Dorsolateral prefrontal cortex (tissue), 120 donors: ENCODE measurements at regions of chr19 and their contacts with region 1.

Region 1: GRCh38 chr19:42450314-42450934 is 7.7 kb upstream of the CXCL17 start:
- DNase-seq: peak; percentile 37 to 81 (median 72)
- H3K4me3 ChIP-seq: no peak overlapping the region
- H3K27ac ChIP-seq: no peak overlapping the region
- H3K27me3 ChIP-seq: no peaks in the 10 kb centered on the region
- CTCF ChIP-seq: peak; percentile 76 to 98 (median 92)

Region 2: DNA sequence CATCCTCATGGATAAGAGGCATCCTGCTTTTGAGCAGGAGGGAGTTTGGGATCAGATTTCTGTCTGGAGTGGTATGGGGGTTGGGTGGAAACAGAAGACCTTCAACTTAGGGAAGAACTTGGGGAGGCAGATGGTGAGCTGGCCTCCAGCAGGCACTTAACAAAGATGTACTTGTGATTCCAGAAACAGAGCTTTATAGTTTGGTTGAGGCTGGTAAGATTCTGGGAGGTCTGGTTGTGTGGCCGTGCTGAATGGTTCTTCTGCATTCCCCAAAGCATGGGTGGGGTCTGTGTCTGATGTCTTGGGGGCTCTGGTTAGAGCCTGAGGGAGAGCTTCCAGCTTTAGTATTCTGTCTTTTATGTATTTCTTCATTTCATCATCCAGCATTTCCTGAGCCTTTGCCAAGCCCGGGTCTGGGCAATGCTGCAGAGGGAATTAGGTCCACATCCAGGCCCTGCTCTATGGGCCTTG is 120.1 kb before region 1 on chr19:
- intact Hi-C with region 1: no loop called
- DNase-seq: no peak
- H3K4me3 ChIP-seq: no peak overlapping the region
- H3K27ac ChIP-seq: peak overlapping the region in 25 of 59 donors; percentile 5 to 66 (median 34)
- H3K27me3 ChIP-seq: no peaks in the 10 kb centered on the region
- CTCF ChIP-seq: no peak

Region 3: GRCh38 chr19:42529248-42529764 is 78.9 kb after region 1 on chr19:
- intact Hi-C with region 1: loop called (anchors 1 to 2 kb)
- DNase-seq: peak in 9 of 10 donors; percentile 7 to 79 (median 65)
- H3K4me3 ChIP-seq: no peak overlapping the region
- H3K27ac ChIP-seq: peak overlapping the region in 4 of 59 donors; percentile 26 to 69 (median 48)
- H3K27me3 ChIP-seq: no peaks in the 10 kb centered on the region
- CTCF ChIP-seq: peak; percentile 51 to 98 (median 89)